ENCODE measurements at regions of chr2 and their contacts with region 1.

Region 1: DNA sequence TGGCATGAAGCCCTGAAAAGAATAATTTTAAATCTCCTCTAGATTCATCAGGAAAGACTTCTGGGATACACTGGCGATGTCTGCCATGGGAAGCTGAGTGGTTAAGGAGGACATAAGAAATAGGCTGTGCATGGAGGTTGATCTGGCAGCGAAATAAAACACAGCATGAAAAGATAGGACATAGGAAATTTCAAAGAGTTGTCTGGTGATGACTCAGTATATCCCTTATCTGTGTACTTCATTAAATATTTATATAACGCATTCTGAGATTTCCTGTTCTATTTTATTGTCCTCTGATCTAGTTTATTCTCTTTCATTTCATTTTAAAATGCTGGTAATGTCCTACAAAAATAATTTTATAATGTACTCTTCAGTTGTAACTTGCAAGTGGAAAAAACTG is 1337.3 kb upstream of the DDX18 start:
- DNase-seq: no peak
- ATAC-seq: no peak
- H3K4me3 ChIP-seq: no peak overlapping the region
- H3K27ac ChIP-seq: no peak overlapping the region
- H3K4me1 ChIP-seq: no peaks in the 10 kb centered on the region
- H3K27me3 ChIP-seq: no peaks in the 10 kb centered on the region
- CTCF ChIP-seq: no peak
- EP300 ChIP-seq: no peak
- POLR2A ChIP-seq: no peak
- RAD21 ChIP-seq: no peak

Region 2: GRCh38 chr2:116456429-116456828 is 20.8 kb before region 1 on chr2:
- CTCF ChIA-PET with region 1: no interaction called
- POLR2A ChIA-PET with region 1: no interaction called
- in situ Hi-C with region 1: no loop called
- intact Hi-C with region 1: no loop called
- DNase-seq: no peak
- ATAC-seq: no peak
- H3K4me3 ChIP-seq: no peak overlapping the region
- H3K27ac ChIP-seq: no peak overlapping the region
- H3K4me1 ChIP-seq: no peaks in the 10 kb centered on the region
- H3K27me3 ChIP-seq: no peaks in the 10 kb centered on the region
- CTCF ChIP-seq: no peak
- EP300 ChIP-seq: no peak
- POLR2A ChIP-seq: no peak
- RAD21 ChIP-seq: no peak

Region 3: DNA sequence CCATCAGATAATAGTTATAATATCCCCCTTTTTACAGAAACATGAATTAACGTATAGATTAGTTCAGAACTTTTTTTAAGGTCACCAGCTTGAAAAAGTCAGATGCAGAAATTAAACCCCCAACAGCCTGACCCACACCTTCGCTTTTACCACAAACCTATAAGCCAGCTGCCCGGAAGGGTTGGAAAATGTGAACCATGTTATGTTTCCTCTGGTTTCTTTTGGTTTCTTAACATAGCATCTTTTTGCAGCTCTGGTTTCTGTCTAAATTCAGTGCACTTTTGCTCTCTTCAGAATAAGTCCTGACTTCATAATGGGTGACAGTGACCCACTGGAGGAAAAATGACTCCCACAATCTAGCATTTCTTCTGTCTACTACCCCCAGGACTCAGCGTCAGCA is 955.5 kb after region 1 on chr2:
- CTCF ChIA-PET with region 1: no interaction called
- POLR2A ChIA-PET with region 1: no interaction called
- in situ Hi-C with region 1: no loop called
- intact Hi-C with region 1: loop called (anchors 10 kb)
- DNase-seq: no peak
- ATAC-seq: no peak
- H3K4me3 ChIP-seq: no peak overlapping the region
- H3K27ac ChIP-seq: no peak overlapping the region
- H3K4me1 ChIP-seq: no peaks in the 10 kb centered on the region
- H3K27me3 ChIP-seq: no peaks in the 10 kb centered on the region
- CTCF ChIP-seq: no peak
- EP300 ChIP-seq: no peak
- POLR2A ChIP-seq: no peak
- RAD21 ChIP-seq: no peak

Measured in HepG2 (cell line).